Activated CD4-positive, alpha-beta T cell treated with anti-CD3 and anti-CD28 coated beads for 36 hours (primary cell): ENCODE measurements at regions of chr15 and their contacts with region 1.

Region 1: DNA sequence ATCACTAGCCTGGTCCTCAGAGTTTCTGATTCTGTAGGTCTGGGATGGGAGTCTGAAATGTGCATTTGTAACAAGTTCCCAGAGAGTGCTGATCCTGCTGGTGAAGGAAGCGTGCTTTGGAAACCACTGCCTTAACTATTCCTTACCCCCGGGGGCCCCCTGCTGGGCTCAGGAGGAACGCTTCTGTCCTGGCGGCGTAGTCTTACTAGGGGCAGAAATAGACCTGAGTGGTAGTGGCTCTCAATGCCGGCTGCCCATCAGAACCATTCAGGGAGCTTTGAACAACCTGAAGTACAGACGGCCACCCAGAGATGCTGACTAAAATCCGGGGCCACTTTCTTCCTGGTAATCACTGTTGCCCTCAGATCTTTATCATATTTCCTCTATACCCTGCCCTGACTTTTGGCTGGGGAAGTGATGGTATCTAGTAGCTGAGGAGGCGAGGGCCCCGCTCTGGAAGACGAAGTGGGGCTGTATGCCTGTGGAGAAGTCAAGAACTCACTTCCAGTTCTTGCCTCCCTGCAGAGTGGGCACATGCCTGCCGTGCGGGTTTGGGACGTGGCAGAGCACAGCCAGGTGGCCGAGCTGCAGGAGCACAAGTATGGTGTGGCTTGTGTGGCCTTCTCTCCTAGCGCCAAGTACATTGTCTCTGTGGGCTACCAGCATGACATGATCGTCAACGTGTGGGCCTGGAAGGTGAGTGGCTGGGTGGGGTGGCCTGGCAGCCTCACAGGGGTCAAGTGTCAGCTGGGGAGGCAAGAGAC is 16.3 kb upstream of the JMJD7 start:
- DNase-seq: peak; percentile 84
- ATAC-seq: peak; percentile 98
- H3K4me3 Mint-ChIP-seq: no peak overlapping the region
- H3K27ac Mint-ChIP-seq: no peak overlapping the region
- H3K4me1 Mint-ChIP-seq: no peaks in the 10 kb centered on the region
- H3K27me3 Mint-ChIP-seq: no peaks in the 10 kb centered on the region

Region 2: DNA sequence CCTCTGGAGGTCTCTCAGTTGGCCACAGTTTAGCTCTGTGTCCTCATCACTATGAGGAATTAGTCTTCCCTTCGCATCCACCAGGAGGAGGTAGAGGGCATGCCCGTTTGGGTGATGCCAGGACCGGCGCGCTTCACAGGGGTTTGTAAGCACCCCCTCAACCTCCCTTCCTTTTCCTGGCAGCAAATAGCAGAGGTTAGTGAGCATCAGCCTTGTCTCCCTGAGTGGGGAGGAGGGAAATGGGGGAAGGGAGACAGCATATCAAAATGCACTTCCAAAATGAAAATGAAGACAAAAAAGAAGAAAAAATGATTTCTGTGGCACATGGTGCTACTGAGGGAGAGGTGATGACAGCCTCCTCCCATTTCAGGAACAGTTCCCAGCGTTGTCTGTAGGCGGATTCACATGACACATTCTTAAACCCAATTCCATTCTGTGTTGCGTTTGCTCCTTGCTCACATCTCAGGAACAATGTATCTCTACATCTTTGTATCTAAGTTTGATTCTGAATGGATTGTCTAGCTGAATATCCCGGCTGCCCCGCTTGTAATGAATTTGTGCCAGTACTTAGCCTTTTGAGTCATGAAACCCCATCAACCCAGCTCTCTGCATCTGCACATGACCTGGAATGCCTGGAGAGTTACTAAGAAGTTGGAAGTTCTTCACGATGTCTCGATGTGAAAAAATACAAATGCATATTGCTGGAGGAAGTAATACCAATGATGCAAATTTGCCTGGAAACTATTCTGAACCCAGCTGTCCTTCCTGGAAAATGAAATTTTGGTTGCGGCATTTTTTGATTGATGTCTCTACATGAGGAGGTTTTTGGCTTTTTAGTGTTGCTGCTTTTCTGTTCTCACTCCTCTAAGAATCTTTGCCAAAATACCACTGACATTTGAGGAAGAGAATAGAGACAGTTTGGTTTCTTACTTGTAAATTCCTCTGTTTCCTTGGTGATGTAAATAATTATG is 207.4 kb before region 1 on chr15:
- CTCF ChIA-PET with region 1: interaction called, 34 read pairs
- POLR2A ChIA-PET with region 1: no interaction called
- intact Hi-C with region 1: loop called (anchors 1 to 2 kb)
- DNase-seq: peak; percentile 75
- ATAC-seq: peak; percentile 96
- H3K4me3 Mint-ChIP-seq: peak overlapping the region; percentile 58
- H3K27ac Mint-ChIP-seq: peak overlapping the region; percentile 40
- H3K4me1 Mint-ChIP-seq: peaks cover 11% of the 10 kb centered on the region
- H3K27me3 Mint-ChIP-seq: peaks cover 14% of the 10 kb centered on the region

Region 3: DNA sequence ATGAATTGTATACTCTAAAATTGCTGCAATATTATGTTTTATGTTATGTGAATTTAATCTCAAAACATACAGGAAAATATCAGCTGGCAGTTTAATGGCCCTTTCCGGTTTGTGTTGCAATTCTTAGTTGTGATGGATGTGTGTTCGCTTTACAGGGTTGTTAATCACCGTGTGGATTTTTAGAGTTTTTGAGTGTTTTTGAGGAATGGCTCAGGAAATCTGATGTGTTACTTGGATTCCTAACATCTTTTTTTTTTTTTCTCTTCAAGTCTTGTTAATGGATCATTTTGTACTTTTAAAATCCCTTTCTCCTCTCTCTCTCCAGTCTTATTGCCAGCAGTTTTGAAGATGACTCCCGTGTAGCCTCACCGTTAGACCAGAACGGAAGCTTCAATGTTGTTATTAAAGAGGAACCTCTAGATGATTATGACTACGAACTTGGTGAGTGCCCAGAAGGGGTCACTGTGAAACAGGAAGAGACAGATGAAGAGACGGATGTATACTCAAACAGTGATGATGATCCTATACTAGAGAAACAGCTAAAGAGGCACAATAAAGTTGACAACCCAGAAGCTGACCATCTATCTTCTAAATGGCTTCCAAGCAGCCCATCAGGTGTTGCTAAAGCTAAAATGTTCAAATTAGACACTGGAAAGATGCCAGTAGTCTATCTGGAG is 115.7 kb before region 1 on chr15:
- CTCF ChIA-PET with region 1: interaction called, 4 read pairs
- POLR2A ChIA-PET with region 1: no interaction called
- intact Hi-C with region 1: loop called in 1 of 2 experiments (anchors 5 kb)
- DNase-seq: peak; percentile 66
- ATAC-seq: peak; percentile 93
- H3K4me3 Mint-ChIP-seq: peak overlapping the region; percentile 2
- H3K27ac Mint-ChIP-seq: peak overlapping the region; percentile 78
- H3K4me1 Mint-ChIP-seq: peaks cover 43% of the 10 kb centered on the region
- H3K27me3 Mint-ChIP-seq: no peaks in the 10 kb centered on the region

Region 4: DNA sequence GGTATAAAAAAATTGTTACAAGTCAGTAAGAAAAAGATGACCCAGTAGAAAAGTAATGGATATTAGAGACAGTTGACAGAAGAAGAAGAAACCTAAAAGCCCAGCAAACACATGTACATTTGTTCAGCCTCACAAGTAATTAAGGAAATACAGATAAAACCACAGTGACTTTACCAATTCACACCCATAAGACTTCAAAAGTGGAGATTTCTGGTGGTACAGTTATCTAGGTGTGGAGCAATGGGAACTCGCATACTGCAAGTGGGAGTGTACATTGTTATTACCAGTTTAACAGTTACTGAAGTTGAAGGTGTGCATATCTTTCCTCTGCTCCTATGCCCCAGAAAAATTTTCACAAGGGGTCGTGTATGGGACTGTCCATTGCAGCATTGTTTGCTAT is 55.4 kb before region 1 on chr15:
- CTCF ChIA-PET with region 1: interaction called, 14 read pairs
- POLR2A ChIA-PET with region 1: no interaction called
- intact Hi-C with region 1: no loop called
- DNase-seq: no peak
- ATAC-seq: no peak
- H3K4me3 Mint-ChIP-seq: no peak overlapping the region
- H3K27ac Mint-ChIP-seq: no peak overlapping the region
- H3K4me1 Mint-ChIP-seq: no peaks in the 10 kb centered on the region
- H3K27me3 Mint-ChIP-seq: no peaks in the 10 kb centered on the region

Region 5: GRCh38 chr15:41904541-41905005 is 93.0 kb after region 1 on chr15:
- CTCF ChIA-PET with region 1: interaction called, 14 read pairs
- POLR2A ChIA-PET with region 1: no interaction called
- intact Hi-C with region 1: no loop called
- DNase-seq: peak; percentile 81
- ATAC-seq: peak; percentile 92
- H3K4me3 Mint-ChIP-seq: no peak overlapping the region
- H3K27ac Mint-ChIP-seq: peak overlapping the region; percentile 4
- H3K4me1 Mint-ChIP-seq: peaks cover 5% of the 10 kb centered on the region
- H3K27me3 Mint-ChIP-seq: no peaks in the 10 kb centered on the region

Region 6: DNA sequence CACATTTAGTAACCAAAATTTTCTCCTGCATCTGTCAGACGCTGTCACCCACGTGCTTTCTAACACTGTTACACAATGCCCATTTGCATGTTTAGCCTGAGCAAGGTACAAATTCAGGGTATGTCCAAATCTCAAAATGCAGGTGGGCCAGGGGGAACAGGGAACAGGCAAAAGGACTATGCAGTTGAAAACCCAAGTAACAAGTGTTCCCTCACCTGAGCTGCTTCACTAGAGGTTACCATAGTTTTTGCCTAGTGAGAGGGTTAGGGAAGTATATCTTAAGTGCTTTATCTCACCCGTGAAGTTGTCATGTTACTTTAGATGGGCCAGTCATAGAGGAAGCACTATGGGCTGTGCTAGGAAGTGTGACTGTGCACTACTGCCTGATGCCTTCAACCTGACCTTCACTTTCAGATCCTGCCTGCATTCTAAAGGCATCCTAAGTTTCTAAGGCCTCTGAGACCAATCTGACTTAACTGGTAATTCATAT is 467.7 kb after region 1 on chr15:
- CTCF ChIA-PET with region 1: no interaction called
- POLR2A ChIA-PET with region 1: no interaction called
- intact Hi-C with region 1: no loop called
- DNase-seq: no peak
- ATAC-seq: peak; percentile 72
- H3K4me3 Mint-ChIP-seq: no peak overlapping the region
- H3K27ac Mint-ChIP-seq: no peak overlapping the region
- H3K4me1 Mint-ChIP-seq: peaks cover 12% of the 10 kb centered on the region
- H3K27me3 Mint-ChIP-seq: no peaks in the 10 kb centered on the region

Region 7: GRCh38 chr15:42495361-42496212 is 684.0 kb after region 1 on chr15 and contains the start of gene SNAP23:
- CTCF ChIA-PET with region 1: no interaction called
- POLR2A ChIA-PET with region 1: no interaction called
- intact Hi-C with region 1: no loop called
- DNase-seq: peak; percentile 89
- ATAC-seq: peak; percentile 95
- H3K4me3 Mint-ChIP-seq: peak within 1 kb of the TSS; percentile 96
- H3K27ac Mint-ChIP-seq: peak within 1 kb of the TSS; percentile 97
- H3K4me1 Mint-ChIP-seq: peaks cover 68% of the 10 kb centered on the region
- H3K27me3 Mint-ChIP-seq: no peaks in the 10 kb centered on the region
- total RNA-seq, gene SNAP23: 45.5 to 77.5 TPM